Sigmoid colon (tissue), 7 donors: ENCODE measurements at regions of chr12 and their contacts with region 1.

Region 1: GRCh38 chr12:57803319-57803893 is 15.1 kb downstream of the AVIL start:
- DNase-seq: no peak
- H3K4me3 ChIP-seq: no peak overlapping the region
- H3K27ac ChIP-seq: peak overlapping the region in 1 of 4 donors; percentile 38
- H3K4me1 ChIP-seq: peaks cover 0 to 8% (median 5%) of the 10 kb centered on the region in 4 donors
- H3K27me3 ChIP-seq: no peaks in the 10 kb centered on the region
- CTCF ChIP-seq: peak; percentile 47 to 82 (median 68)
- EP300 ChIP-seq: no peak
- POLR2A ChIP-seq: no peak

Region 2: DNA sequence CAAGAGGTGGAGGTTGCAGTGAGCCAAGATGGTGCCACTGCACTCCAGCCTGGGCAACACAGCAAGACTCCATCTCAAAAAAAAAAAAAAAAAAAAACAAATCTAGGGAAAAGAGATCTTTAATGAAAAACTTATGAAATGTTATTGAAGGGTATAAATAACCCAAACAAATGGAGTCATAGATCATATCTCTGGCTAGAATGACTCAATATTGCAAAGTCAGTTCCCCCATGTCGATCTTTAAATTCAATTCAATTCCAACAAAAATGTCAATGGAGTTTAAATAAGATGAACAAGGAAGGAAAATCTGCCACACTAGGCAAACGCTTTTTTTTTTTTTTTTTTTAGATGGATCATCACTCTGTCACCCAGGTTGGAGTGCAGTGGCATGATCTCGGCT is 451.2 kb before region 1 on chr12:
- intact Hi-C with region 1: no loop called
- DNase-seq: no peak
- H3K4me3 ChIP-seq: no peak overlapping the region
- H3K27ac ChIP-seq: no peak overlapping the region
- H3K4me1 ChIP-seq: no peaks in the 10 kb centered on the region
- H3K27me3 ChIP-seq: no peaks in the 10 kb centered on the region
- CTCF ChIP-seq: no peak
- EP300 ChIP-seq: no peak
- POLR2A ChIP-seq: no peak

Region 3: GRCh38 chr12:57829025-57829777 is 25.8 kb after region 1 on chr12:
- intact Hi-C with region 1: loop called (anchors 2 kb)
- DNase-seq: no peak
- H3K4me3 ChIP-seq: no peak overlapping the region
- H3K27ac ChIP-seq: peak overlapping the region; percentile 57 to 100 (median 84)
- H3K4me1 ChIP-seq: peaks cover 0 to 68% (median 61%) of the 10 kb centered on the region in 4 donors
- H3K27me3 ChIP-seq: no peaks in the 10 kb centered on the region
- CTCF ChIP-seq: no peak
- EP300 ChIP-seq: no peak
- POLR2A ChIP-seq: no peak